Activated T-helper 2 cell treated with anti-CD3 and anti-CD28 coated beads, Interferon-gamma antibody, Interleukin-2, Interleukin-4, amounts not matched to agents 10 μg/mL and 5 μg/mL and 100 μg/mL, durations not matched to agents 14 hours and 24 hours and 36 hours (primary cell): ENCODE measurements at regions of chr1 and their contacts with region 1.

Region 1: DNA sequence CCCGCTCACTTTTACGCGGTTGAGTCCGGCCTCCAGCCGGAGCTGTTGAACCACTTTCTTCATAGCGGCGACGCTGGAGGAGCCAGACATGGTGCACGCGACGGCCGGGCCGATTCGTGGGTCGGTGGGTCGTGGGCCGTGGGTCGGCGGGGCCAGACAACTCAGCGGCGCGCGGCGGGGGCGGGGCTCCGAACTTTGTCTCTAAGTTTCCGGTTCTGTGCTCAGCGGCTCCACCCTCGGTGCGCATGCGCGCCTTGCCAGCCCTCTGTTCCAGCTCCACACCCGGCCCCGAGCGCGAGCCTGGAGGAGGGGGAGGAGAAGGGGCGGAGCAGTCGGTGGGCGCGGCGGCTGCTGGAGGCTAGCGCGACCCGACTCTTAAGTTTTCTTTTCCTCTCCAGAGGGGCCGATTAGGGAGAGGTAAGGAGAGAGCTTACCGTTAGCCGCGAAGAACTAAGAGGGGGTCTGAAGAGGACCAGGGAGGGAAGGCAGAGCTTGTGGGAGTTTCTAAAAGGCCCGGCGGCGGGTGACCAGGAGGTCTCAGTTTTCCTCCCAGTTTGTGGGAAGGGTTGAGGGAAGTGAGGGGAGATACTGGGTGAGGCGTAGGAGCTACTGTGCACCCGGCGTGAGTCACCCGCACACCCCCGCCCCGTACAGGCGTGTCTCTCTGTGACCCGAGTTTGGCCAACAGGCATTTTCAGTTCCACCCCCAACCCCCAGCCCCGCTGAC is at the starts of genes GNG5 and SPATA1:
- DNase-seq: peak; percentile 97
- H3K4me3 Mint-ChIP-seq: peak within 1 kb of the TSS; percentile 100
- H3K27ac Mint-ChIP-seq: peak within 1 kb of the TSS; percentile 99
- H3K4me1 Mint-ChIP-seq: peaks cover 26% of the 10 kb centered on the region
- H3K27me3 Mint-ChIP-seq: no peaks in the 10 kb centered on the region
- total RNA-seq, gene GNG5: 118 and 126 TPM in 2 replicates
- total RNA-seq, gene SPATA1: 1.4 and 1.5 TPM in 2 replicates

Region 2: DNA sequence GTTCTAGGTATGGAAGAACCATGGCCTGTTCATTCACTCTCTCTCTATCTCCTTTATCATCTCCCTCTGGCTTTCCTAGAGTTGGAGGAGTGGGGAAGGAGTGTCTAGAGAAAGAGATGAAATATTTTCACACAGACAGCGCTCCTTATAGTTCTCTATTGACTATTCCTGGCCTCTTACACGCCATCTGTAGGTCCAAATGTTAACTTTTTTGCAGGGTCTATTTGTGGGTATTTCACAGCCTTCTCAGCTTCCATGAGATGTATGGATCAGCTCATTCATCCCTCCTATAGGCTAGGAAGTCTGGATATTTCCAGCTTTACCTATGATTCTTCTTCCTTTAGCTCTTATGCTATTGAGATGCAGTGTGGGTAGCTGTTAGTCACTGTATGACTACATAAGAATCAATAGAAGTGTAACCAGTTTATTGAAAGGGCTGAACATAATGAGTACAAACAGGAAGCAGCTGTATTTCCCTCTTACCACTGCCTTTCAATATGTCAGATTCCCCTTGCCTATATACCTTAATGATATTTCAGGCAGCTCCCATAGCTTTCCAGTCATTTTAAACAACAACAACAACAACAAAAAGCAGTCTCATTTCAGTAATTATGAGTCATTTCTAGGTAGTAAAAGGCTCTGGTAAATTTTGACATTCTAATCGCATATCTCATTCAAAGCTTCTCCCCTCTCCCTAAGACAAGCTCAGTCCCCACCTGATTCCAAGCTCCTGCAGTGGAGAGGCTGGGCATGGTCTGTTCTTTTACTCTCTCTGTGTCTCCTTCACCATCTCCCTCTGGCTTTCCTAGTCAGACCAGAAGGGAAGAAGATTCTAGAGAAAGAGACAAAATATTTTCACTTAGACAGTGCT is 656.7 kb before region 1 on chr1:
- intact Hi-C with region 1: no loop called
- DNase-seq: no peak
- H3K4me3 Mint-ChIP-seq: no peak overlapping the region
- H3K27ac Mint-ChIP-seq: no peak overlapping the region
- H3K4me1 Mint-ChIP-seq: peaks cover 13% of the 10 kb centered on the region
- H3K27me3 Mint-ChIP-seq: no peaks in the 10 kb centered on the region

Region 3: DNA sequence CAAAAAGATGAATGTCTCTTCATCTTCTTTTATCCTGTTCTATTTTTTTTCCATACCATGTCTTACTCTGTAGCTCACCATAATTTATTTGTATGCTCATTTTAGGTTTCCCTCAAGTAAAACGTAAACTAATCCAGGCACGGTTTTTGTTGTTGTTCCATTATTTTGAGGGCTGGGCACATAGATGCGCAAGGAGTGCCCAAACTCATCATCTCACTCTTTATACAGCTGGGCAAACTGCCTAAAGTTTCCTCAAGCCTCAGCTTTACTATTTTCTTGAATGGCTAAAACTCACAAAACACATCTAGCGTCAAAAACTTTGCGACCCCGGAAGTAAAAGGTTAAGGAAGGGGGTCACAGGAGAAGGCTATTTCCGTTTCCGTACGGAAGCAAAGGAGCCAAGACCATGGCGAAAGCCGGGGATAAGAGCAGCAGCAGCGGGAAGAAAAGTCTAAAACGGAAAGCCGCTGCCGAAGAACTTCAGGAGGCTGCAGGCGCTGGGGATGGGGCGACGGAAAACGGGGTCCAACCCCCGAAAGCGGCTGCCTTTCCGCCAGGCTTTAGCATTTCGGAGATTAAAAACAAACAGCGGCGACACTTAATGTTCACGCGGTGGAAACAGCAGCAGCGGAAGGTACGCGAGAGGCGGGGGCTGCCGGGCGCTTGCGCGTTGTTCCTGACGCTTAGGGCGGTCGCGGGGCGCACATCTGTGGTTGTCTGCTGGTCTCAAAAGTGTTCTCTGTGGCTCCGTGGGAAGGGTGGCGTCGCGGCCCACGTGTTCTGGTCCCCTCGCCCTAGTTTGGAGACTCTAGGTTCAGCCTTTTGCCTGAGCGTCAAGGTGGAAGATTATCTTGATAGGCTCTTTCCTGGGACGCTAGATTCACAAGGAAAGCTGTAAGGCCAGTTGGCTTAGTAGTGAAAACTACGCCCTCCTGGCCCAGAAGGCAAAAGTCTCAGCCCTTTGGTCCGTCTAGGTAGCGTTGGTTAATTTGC is 27.0 kb before region 1 on chr1 and contains the start of gene RPF1:
- intact Hi-C with region 1: loop called (anchors 1 kb)
- DNase-seq: peak; percentile 71
- H3K4me3 Mint-ChIP-seq: peak within 1 kb of the TSS; percentile 99
- H3K27ac Mint-ChIP-seq: peak within 1 kb of the TSS; percentile 99
- H3K4me1 Mint-ChIP-seq: peaks cover 26% of the 10 kb centered on the region
- H3K27me3 Mint-ChIP-seq: peaks cover 26% of the 10 kb centered on the region
- total RNA-seq, gene RPF1: 58.9 and 62.7 TPM in 2 replicates

Region 4: DNA sequence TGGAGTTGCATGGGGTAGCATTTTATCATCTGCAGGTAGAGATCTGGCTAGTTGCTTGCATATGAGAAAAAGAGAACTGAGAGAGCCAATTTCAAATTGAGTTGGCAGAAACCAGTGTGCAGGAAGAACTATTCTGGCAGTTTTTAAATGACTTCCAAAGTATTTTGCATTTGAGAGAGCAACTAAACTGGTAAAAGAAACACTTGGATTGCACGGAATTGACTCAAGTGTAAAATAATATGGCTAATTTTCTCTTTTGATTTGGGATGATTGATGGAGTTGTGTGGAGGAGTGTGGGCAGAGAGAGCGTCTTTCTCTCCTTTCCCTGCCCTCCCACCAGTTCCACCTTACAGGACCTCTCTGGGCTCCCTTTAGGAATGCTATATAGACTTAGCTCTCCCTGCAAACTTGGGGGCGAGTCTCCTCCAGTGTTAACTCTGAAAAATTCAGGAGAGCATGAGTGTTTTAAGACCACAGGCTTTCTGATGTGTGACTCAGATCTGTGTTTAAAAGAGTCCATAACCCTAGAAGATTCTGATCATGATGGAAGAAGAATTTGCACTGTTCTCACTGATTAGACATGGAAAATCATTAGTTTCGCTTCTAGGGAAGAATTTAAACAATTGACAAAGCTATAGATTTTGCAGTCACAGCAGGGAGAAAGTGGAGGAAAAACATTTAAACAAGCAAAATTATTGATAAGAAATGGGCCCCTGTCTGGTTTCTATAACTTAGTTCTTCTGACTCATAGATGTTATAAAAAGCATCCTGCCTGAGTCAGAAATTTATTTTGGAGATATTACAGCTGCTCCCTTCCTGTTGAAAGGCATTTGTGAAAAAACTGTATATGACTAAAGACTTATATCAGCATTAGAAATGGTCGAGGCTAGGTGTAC is 92.9 kb after region 1 on chr1:
- intact Hi-C with region 1: loop called (anchors 1 kb)
- DNase-seq: no peak
- H3K4me3 Mint-ChIP-seq: no peak overlapping the region
- H3K27ac Mint-ChIP-seq: peak overlapping the region; percentile 80
- H3K4me1 Mint-ChIP-seq: peaks cover 25% of the 10 kb centered on the region
- H3K27me3 Mint-ChIP-seq: no peaks in the 10 kb centered on the region